ENCODE measurements at regions of chr4 and their contacts with region 1.

Region 1: DNA sequence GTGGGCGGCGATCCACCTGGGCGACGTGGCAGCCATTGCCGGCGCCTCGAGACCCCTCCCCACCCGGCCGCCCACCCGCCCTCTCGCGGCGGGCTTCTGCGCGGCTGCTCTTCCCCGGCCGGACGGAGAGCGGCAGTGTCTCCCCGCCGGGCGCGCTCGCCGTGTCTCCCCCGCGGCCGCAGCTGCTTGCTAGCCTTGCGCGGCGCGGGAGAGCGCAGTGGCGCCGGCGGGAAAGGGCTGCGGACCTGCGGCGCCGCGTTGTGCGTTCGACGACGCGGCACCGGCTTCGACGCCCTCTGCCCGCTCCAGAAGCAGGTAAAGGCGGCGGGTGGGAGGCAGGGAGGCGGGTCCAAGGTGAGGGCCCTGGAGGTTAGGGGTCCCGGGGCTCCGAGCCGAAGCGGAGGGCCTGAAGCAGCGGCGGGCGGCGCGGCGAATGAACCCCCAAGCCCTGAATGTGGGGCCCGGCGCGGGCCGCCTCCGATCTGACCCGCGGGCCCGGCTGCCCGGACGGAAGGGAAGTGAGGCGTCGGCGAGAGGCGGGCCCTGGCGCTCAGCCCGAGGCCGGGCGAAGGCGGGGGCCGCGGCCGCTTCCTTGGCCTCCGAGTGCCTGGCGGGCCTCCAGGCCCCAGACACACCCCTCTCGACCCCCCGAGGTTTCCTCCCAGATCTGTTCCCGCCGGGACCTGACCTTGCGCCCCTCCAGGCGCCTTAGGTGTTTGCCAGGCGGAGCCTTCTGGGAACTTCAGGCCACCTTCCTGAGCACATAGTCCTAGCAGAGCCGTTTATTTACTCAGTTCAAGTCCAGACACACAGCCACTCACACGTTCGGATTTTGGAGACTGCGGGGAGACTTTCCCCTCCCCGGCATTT is at the start of gene N4BP2:
- DNase-seq: peak; percentile 58 to 82 (median 76)
- ATAC-seq: peak; percentile 79
- H3K4me3 ChIP-seq: peak within 1 kb of the TSS; percentile 80
- H3K4me3 Mint-ChIP-seq: peak within 1 kb of the TSS; percentile 91 to 100 (median 97)
- H3K27ac ChIP-seq: peak within 1 kb of the TSS; percentile 91
- H3K27ac Mint-ChIP-seq: peak within 1 kb of the TSS; percentile 94 to 99 (median 98)
- H3K4me1 ChIP-seq: peaks cover 14 to 15% of the 10 kb centered on the region in 2 donors
- H3K4me1 Mint-ChIP-seq: peaks cover 19 to 48% (median 36%) of the 10 kb centered on the region in 7 donors
- H3K27me3 ChIP-seq: no peaks in the 10 kb centered on the region
- H3K27me3 Mint-ChIP-seq: peaks cover 0 to 6% (median 0%) of the 10 kb centered on the region in 5 donors
- total RNA-seq, gene N4BP2: 16.0 to 37.2 (median 22.2) TPM

Region 2: DNA sequence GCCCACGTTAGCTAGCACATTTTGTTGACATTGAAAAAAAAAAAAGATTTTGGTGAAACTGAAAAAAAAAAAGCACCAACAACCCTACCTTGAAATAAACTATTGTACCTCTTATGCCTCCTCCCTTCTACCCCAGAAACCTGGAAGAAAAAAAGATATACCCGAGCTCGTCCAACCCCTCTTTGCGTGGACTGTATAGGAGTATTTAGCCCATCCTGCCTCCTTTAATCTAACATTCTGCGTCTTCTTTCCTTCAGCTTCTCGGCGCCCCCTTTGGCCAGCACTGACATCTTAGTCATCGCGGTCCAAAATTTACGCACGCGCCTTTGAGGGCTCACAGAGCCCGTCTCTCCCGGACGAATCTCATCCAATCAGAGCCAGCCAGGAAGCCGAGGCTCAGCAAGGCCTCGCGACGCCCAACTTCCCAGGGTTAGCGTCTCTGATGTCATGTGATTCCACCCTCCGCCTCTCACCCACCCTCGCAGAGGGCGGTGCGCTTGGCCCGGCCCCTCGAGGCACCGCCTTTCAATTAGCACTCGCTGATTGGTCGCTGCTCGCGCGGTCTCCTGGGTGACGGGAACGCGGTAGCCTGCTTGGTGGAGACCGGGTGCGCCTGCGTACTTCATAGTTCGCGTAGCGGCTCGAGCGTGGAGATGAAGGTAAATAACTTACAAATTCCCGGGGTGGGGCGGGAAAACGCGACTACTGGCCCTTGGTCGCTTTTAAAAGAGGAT is 874.9 kb before region 1 on chr4 and contains the start of gene WDR19:
- CTCF ChIA-PET with region 1: no interaction called
- POLR2A ChIA-PET with region 1: no interaction called
- intact Hi-C with region 1: loop called (anchors 2 kb)
- DNase-seq: peak; percentile 91 to 98 (median 98)
- ATAC-seq: peak; percentile 98
- H3K4me3 ChIP-seq: peak within 1 kb of the TSS; percentile 91
- H3K4me3 Mint-ChIP-seq: no peak within 1 kb of the TSS
- H3K27ac ChIP-seq: peak within 1 kb of the TSS; percentile 72
- H3K27ac Mint-ChIP-seq: peak within 1 kb of the TSS in 4 of 9 donors; percentile 8 to 47 (median 21)
- H3K4me1 ChIP-seq: peaks cover 3 to 12% of the 10 kb centered on the region in 2 donors
- H3K4me1 Mint-ChIP-seq: peaks cover 0 to 12% (median 9%) of the 10 kb centered on the region in 7 donors
- H3K27me3 ChIP-seq: no peaks in the 10 kb centered on the region
- H3K27me3 Mint-ChIP-seq: peaks cover 0 to 16% (median 3%) of the 10 kb centered on the region in 5 donors
- total RNA-seq, gene WDR19: 14.0 to 44.3 (median 15.4) TPM

Region 3: DNA sequence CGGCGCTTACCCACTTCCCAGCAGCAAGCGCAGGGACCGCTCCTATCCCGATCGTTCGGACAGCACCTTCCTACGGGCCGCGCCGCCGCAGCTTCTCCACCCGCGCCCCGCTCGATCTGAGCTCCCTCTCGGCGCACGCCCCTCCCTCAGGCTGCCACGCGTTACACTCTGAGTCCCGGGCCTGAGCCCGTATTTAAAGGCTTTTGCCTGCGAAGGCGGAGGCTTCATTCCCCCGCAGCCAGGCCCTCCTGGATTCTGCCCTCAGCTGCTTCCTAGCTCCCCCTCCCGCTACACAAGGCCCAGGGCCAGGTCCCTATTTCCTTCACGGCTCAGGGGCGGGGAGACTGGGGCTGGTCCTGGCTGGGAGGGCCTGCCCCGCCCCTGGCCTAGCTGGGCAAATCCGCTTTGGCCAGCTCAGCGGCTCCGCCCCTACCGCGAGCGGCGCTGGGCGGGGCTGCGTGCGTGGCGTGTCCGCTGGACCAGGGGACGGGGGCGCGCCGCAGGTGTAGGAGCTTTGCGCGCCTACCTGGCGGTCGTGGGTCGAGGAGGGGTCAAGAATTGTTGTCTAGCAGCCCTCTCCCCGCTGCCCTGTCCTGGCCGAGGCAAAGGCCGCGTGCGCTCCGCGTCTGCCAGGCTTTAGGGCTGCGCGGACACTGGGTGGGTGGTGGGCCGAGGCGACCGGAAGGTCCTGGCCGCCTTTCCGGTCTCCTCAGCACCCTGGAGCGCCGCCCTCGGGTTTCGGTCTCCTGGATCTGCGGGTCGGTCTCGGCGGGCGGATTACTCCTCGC is 529.5 kb before region 1 on chr4 and contains the start of gene UGDH:
- CTCF ChIA-PET with region 1: no interaction called
- POLR2A ChIA-PET with region 1: no interaction called
- intact Hi-C with region 1: loop called in 1 of 2 experiments (anchors 5 kb)
- DNase-seq: peak; percentile 85 to 95 (median 88)
- ATAC-seq: peak; percentile 99
- H3K4me3 ChIP-seq: peak within 1 kb of the TSS; percentile 81
- H3K4me3 Mint-ChIP-seq: peak within 1 kb of the TSS; percentile 88 to 99 (median 98)
- H3K27ac ChIP-seq: peak within 1 kb of the TSS; percentile 74
- H3K27ac Mint-ChIP-seq: peak within 1 kb of the TSS; percentile 84 to 97 (median 93)
- H3K4me1 ChIP-seq: peaks cover 7 to 10% of the 10 kb centered on the region in 2 donors
- H3K4me1 Mint-ChIP-seq: peaks cover 11 to 26% (median 19%) of the 10 kb centered on the region in 7 donors
- H3K27me3 ChIP-seq: no peaks in the 10 kb centered on the region
- H3K27me3 Mint-ChIP-seq: no peaks in the 10 kb centered on the region
- total RNA-seq, gene UGDH: 6.9 to 20.9 (median 17.7) TPM

Region 4: GRCh38 chr4:40149960-40150385 is 93.0 kb after region 1 on chr4:
- CTCF ChIA-PET with region 1: interaction called, 5 read pairs
- POLR2A ChIA-PET with region 1: interaction called, 3 read pairs
- intact Hi-C with region 1: loop called in 1 of 2 experiments (anchors 1 kb)
- DNase-seq: peak; percentile 28 to 85 (median 77)
- ATAC-seq: peak; percentile 98
- H3K4me3 ChIP-seq: no peak overlapping the region
- H3K4me3 Mint-ChIP-seq: peak overlapping the region in 6 of 10 donors; percentile 11 to 64 (median 44)
- H3K27ac ChIP-seq: peak overlapping the region; percentile 0
- H3K27ac Mint-ChIP-seq: peak overlapping the region; percentile 62 to 94 (median 89)
- H3K4me1 ChIP-seq: peaks cover 4 to 42% of the 10 kb centered on the region in 2 donors
- H3K4me1 Mint-ChIP-seq: peaks cover 2 to 52% (median 44%) of the 10 kb centered on the region in 7 donors
- H3K27me3 ChIP-seq: no peaks in the 10 kb centered on the region
- H3K27me3 Mint-ChIP-seq: no peaks in the 10 kb centered on the region

Region 5: GRCh38 chr4:40309250-40309774 is 252.4 kb after region 1 on chr4:
- CTCF ChIA-PET with region 1: interaction called, 6 read pairs
- POLR2A ChIA-PET with region 1: interaction called, 11 read pairs
- intact Hi-C with region 1: loop called (anchors 1 to 2 kb)
- DNase-seq: peak; percentile 75 to 89 (median 86)
- ATAC-seq: peak; percentile 79
- H3K4me3 ChIP-seq: peak overlapping the region; percentile 35
- H3K4me3 Mint-ChIP-seq: peak overlapping the region; percentile 67 to 91 (median 78)
- H3K27ac ChIP-seq: peak overlapping the region; percentile 87
- H3K27ac Mint-ChIP-seq: peak overlapping the region; percentile 94 to 100 (median 99)
- H3K4me1 ChIP-seq: peaks cover 50 to 81% of the 10 kb centered on the region in 2 donors
- H3K4me1 Mint-ChIP-seq: peaks cover 61 to 97% (median 90%) of the 10 kb centered on the region in 7 donors
- H3K27me3 ChIP-seq: no peaks in the 10 kb centered on the region
- H3K27me3 Mint-ChIP-seq: no peaks in the 10 kb centered on the region

Region 6: GRCh38 chr4:40719008-40719623 is 662.2 kb after region 1 on chr4:
- CTCF ChIA-PET with region 1: no interaction called
- POLR2A ChIA-PET with region 1: no interaction called
- intact Hi-C with region 1: loop called in 1 of 2 experiments (anchors 5 kb)
- DNase-seq: peak in 1 of 9 donors; percentile 39
- ATAC-seq: no peak
- H3K4me3 ChIP-seq: no peak overlapping the region
- H3K4me3 Mint-ChIP-seq: no peak overlapping the region
- H3K27ac ChIP-seq: no peak overlapping the region
- H3K27ac Mint-ChIP-seq: peak overlapping the region in 1 of 9 donors; percentile 36
- H3K4me1 ChIP-seq: peaks cover 0 to 13% of the 10 kb centered on the region in 2 donors
- H3K4me1 Mint-ChIP-seq: peaks cover 0 to 33% (median 0%) of the 10 kb centered on the region in 7 donors
- H3K27me3 ChIP-seq: no peaks in the 10 kb centered on the region
- H3K27me3 Mint-ChIP-seq: no peaks in the 10 kb centered on the region